IMR-90 (cell line): ENCODE measurements at regions of chr3 and their contacts with region 1.

Region 1: GRCh38 chr3:127652231-127652995 is 20.3 kb upstream of the ABTB1 start:
- DNase-seq: peak; percentile 50
- ATAC-seq: peak; percentile 92
- H3K4me3 ChIP-seq: no peak overlapping the region
- H3K27ac ChIP-seq: no peak overlapping the region
- H3K4me1 ChIP-seq: peaks cover 6% of the 10 kb centered on the region
- H3K27me3 ChIP-seq: peaks cover 9% of the 10 kb centered on the region
- CTCF ChIP-seq: peak; percentile 91
- POLR2A ChIP-seq: 0 out of 2 replicates have a peak, but pooled peaks have one; percentile 36
- RAD21 ChIP-seq: peak; percentile 96

Region 2: DNA sequence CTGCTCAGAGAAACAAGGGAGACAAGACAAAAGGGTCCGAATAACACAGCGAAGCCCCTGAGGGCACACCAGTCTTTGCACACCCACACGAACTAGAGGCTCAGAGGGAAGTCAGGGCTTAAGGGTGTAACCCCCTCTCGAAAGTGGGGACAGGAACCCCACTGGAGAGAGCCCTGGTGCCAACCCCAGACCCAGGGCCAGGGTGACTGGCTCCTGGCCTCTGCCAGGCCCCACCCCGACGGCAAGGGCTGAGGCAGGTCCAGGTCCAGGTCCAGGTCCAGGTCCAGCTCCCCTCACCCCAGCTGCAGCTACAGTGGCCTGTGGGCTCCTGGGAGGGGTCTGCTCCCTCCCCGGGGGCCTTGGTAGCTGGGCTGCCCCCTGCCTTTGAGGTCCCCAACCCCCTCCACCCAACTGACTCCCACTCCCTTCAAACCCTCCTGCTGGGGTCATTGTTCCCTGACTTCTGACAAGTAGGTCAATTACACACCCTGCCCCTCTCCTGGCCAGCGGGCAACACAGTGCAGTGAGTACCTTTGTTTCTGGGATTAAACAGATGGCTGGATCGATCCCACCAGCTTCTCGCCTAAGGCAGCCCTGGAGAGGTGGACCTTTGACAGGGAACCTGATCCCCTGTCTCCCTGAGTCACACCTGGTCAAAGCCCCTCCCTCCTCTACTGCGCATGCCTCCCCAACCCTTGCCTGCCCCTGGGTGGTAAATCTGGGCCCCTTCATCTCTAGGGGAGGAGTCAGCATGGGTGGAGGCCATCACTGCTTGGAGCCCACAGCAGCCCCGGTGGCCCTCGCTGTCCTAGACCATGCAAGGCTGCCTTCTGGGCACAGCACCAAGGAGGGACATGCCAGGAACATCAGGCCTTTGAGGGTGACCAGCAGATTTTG is 469.7 kb before region 1 on chr3:
- CTCF ChIA-PET with region 1: no interaction called
- POLR2A ChIA-PET with region 1: no interaction called
- dilution Hi-C with region 1: no loop called
- in situ Hi-C with region 1: no loop called
- intact Hi-C with region 1: no loop called
- DNase-seq: no peak
- ATAC-seq: no peak
- H3K4me3 ChIP-seq: no peak overlapping the region
- H3K27ac ChIP-seq: no peak overlapping the region
- H3K4me1 ChIP-seq: no peaks in the 10 kb centered on the region
- H3K27me3 ChIP-seq: peaks cover 2% of the 10 kb centered on the region
- CTCF ChIP-seq: no peak
- POLR2A ChIP-seq: no peak
- RAD21 ChIP-seq: no peak

Region 3: GRCh38 chr3:127690823-127691452 is 38.5 kb after region 1 on chr3:
- CTCF ChIA-PET with region 1: no interaction called
- POLR2A ChIA-PET with region 1: no interaction called
- dilution Hi-C with region 1: no loop called
- in situ Hi-C with region 1: no loop called
- intact Hi-C with region 1: loop called (anchors 2 kb)
- DNase-seq: peak; percentile 70
- ATAC-seq: peak; percentile 73
- H3K4me3 ChIP-seq: no peak overlapping the region
- H3K27ac ChIP-seq: peak overlapping the region; percentile 80
- H3K4me1 ChIP-seq: peaks cover 26% of the 10 kb centered on the region
- H3K27me3 ChIP-seq: no peaks in the 10 kb centered on the region
- CTCF ChIP-seq: peak; percentile 74
- POLR2A ChIP-seq: no peak
- RAD21 ChIP-seq: peak; percentile 78

Region 4: GRCh38 chr3:127831723-127832172 is 179.3 kb after region 1 on chr3:
- CTCF ChIA-PET with region 1: no interaction called
- POLR2A ChIA-PET with region 1: no interaction called
- dilution Hi-C with region 1: no loop called
- in situ Hi-C with region 1: no loop called
- intact Hi-C with region 1: loop called (anchors 1 kb)
- DNase-seq: peak; percentile 49
- ATAC-seq: peak; percentile 66
- H3K4me3 ChIP-seq: no peak overlapping the region
- H3K27ac ChIP-seq: no peak overlapping the region
- H3K4me1 ChIP-seq: no peaks in the 10 kb centered on the region
- H3K27me3 ChIP-seq: no peaks in the 10 kb centered on the region
- CTCF ChIP-seq: peak; percentile 73
- POLR2A ChIP-seq: no peak
- RAD21 ChIP-seq: peak; percentile 86

Region 5: DNA sequence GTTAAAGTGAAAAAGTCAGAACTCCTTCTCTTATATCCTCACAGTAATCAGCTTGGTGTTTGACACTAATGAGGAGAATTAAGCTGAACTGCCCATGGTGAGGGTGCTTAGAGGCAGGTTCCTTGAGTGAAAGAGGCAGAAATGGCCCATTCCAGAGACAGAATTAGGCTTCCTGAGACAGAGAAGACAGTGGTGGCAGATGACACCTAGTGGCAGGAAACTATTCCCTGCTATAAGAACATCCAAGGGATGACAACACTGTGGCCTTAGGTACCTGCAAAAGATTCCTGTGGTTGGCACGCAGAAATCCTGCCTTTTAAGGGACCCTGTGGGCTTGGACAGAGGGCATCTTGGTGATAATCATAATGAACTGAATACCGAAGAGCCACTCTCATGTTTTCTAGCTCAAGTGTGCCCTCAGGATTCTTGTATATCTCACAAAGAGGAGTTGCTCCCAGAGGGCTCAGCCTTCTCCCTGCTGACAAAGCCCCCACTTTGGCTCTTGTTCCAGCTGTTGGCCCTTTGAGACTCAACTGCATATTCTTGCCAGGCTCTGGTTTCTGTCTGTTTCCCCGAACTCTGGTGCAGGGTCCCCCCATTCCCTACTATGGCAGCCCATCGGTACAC is 318.7 kb after region 1 on chr3:
- CTCF ChIA-PET with region 1: no interaction called
- POLR2A ChIA-PET with region 1: no interaction called
- dilution Hi-C with region 1: no loop called
- in situ Hi-C with region 1: loop called (anchors 10 kb)
- intact Hi-C with region 1: loop called (anchors 1 kb)
- DNase-seq: peak; percentile 60
- ATAC-seq: peak; percentile 86
- H3K4me3 ChIP-seq: no peak overlapping the region
- H3K27ac ChIP-seq: no peak overlapping the region
- H3K4me1 ChIP-seq: no peaks in the 10 kb centered on the region
- H3K27me3 ChIP-seq: peaks cover 51% of the 10 kb centered on the region
- CTCF ChIP-seq: peak; percentile 72
- POLR2A ChIP-seq: no peak
- RAD21 ChIP-seq: peak; percentile 86

Region 6: DNA sequence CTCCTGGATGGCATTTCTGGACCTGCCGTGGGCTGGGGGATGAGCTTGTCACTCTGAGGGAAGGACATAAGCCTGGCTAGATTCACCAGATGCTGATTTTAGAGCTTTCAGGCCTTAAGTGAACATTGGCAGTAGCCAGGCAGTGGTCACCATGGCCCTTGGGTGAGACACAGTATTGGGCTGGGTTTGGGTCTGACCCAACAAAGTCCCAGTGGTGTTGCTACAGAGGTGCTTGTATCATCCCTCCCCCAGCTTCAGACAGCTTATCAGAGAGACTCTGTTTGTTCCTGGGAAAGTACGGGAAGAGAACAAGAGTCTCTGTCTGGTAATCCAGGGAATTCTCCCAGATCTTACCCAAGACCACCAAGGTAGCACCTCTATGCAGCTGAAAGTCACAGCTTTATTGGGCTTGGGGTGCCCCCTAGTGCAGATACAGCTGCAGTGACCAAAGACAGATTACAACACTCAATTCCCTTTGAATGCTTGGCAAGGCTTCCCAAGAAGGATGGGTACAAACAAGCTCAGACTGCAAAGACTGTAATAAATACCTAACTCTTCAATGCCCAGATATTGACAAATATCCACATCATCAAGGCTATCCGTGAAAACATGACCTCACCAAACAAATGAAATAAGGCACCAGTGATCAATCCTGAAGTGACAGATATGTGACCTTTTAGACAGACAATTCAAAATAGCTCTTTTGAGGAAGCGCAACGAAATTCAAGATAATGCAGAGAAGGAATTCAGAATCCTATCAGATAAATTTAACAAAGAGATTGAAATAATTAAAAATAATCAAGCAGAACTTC is 481.1 kb after region 1 on chr3:
- CTCF ChIA-PET with region 1: no interaction called
- POLR2A ChIA-PET with region 1: interaction called, 3 read pairs
- dilution Hi-C with region 1: no loop called
- in situ Hi-C with region 1: no loop called
- intact Hi-C with region 1: loop called (anchors 5 kb)
- DNase-seq: peak; percentile 70
- ATAC-seq: peak; percentile 87
- H3K4me3 ChIP-seq: no peak overlapping the region
- H3K27ac ChIP-seq: no peak overlapping the region
- H3K4me1 ChIP-seq: no peaks in the 10 kb centered on the region
- H3K27me3 ChIP-seq: peaks cover 3% of the 10 kb centered on the region; the same call in 1 of the 2 replicates
- CTCF ChIP-seq: peak; percentile 81
- POLR2A ChIP-seq: no peak
- RAD21 ChIP-seq: peak; percentile 87

Region 7: GRCh38 chr3:129016356-129016719 is 1363.9 kb after region 1 on chr3:
- CTCF ChIA-PET with region 1: no interaction called
- POLR2A ChIA-PET with region 1: no interaction called
- dilution Hi-C with region 1: no loop called
- in situ Hi-C with region 1: no loop called
- intact Hi-C with region 1: no loop called
- DNase-seq: no peak
- ATAC-seq: no peak
- H3K4me3 ChIP-seq: no peak overlapping the region
- H3K27ac ChIP-seq: no peak overlapping the region
- H3K4me1 ChIP-seq: peaks cover 20% of the 10 kb centered on the region
- H3K27me3 ChIP-seq: peaks cover 7% of the 10 kb centered on the region; the same call in 1 of the 2 replicates
- CTCF ChIP-seq: no peak
- POLR2A ChIP-seq: no peak
- RAD21 ChIP-seq: no peak